T-cell (primary cell): ENCODE measurements at regions of chr3 and their contacts with region 1.

Region 1: DNA sequence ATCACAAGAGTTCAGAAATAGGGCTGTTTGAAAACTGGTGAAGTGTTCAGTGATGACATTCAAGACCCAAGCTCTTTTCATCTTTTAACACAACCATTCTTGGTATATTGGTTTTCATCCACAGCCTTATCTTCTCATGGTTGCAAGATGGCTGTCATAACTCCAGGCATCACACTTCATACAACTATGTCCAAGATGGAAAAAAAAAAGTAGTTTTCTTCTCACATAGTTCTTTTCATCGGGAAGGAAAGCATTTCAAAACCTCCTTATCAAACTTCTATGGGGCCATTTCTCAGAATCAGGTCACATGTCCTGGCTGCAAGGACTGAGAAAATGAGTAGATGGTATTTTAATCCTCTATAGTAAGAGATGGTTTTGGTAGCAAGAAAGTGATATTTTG is 21.1 kb upstream of the MFSD1 start:
- DNase-seq: no peak
- ATAC-seq: no peak
- H3K4me3 ChIP-seq: no peak overlapping the region
- H3K4me3 Mint-ChIP-seq: no peak overlapping the region
- H3K27ac ChIP-seq: no peak overlapping the region
- H3K27ac Mint-ChIP-seq: no peak overlapping the region
- H3K4me1 ChIP-seq: no peaks in the 10 kb centered on the region
- H3K4me1 Mint-ChIP-seq: no peaks in the 10 kb centered on the region
- H3K27me3 ChIP-seq: no peaks in the 10 kb centered on the region
- H3K27me3 Mint-ChIP-seq: no peaks in the 10 kb centered on the region

Region 2: DNA sequence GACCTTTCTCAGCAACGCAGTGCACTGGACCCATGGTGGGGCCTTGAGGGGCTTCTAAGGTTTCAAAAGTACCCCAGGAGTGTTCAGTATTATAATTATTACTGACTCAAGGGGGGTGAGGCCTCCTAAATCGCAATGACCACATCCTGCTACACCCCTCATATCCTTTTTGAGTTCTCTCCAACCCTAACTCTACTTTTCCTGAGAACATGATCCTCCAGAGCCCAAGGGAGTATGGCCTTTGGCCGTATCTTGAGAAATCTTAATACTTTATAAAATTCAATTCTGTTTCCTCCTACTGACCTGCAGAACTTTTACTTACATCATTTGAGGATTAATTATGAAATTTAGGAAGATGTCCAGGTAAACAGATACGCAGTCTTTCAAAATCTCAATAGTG is 18.1 kb before region 1 on chr3:
- CTCF ChIA-PET with region 1: interaction called in 1 of 2 experiments, 15 read pairs
- POLR2A ChIA-PET with region 1: no interaction called
- DNase-seq: no peak
- ATAC-seq: no peak
- H3K4me3 ChIP-seq: no peak overlapping the region
- H3K4me3 Mint-ChIP-seq: no peak overlapping the region
- H3K27ac ChIP-seq: no peak overlapping the region
- H3K27ac Mint-ChIP-seq: no peak overlapping the region
- H3K4me1 ChIP-seq: no peaks in the 10 kb centered on the region
- H3K4me1 Mint-ChIP-seq: no peaks in the 10 kb centered on the region
- H3K27me3 ChIP-seq: no peaks in the 10 kb centered on the region
- H3K27me3 Mint-ChIP-seq: no peaks in the 10 kb centered on the region